ENCODE measurements at regions of chr7 and their contacts with region 1.

Region 1: DNA sequence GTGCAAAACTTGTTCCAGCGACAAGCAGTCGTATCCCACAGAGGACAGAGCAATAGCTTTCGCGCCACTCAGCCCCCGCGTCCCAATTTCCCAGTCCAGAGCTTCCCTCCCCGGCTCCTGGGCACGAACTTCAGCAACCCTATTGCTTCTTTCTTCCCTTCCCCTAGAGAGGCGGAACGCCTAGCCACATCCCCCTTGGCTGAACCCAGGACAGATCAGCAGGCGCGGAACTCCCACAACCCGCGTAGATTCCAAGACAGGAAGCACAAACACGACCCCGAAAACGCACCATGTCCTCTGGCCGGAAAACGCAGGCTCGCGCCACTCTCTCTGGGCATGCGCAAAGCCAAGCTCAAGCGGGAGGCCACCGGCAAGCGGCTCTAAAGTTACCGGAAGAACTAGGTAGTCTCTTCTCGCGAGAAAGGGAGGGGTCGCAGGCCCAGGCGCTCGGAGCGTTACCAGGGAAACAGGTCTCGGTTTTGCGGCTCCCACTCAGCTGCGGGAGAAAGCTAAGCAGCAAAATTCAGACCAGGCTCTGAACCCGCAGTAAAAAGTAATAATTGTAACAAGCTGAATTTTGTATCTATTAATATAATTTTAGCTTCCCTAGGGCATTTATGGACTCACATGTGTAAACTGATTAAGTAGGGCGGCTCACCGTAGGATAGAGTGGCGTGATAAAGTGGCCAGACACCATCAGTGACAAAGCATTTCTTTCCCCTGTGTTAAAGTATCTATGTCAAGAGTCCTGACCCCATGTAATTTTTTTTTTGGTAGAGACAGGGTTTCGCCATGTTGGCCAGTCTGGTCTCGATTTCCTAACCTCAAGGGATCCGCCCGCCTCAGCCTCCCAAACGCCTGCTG is at the start of gene TMEM209:
- DNase-seq: peak; percentile 87
- ATAC-seq: peak; percentile 98
- H3K4me3 ChIP-seq: peak within 1 kb of the TSS; percentile 95
- H3K27ac ChIP-seq: peak within 1 kb of the TSS; percentile 98
- H3K4me1 ChIP-seq: 0 out of 2 replicates have a peak, but pooled peaks cover 4% of the 10 kb centered on the region
- H3K27me3 ChIP-seq: no peaks in the 10 kb centered on the region
- CTCF ChIP-seq: no peak
- total RNA-seq, gene TMEM209: 32.3 TPM

Region 2: DNA sequence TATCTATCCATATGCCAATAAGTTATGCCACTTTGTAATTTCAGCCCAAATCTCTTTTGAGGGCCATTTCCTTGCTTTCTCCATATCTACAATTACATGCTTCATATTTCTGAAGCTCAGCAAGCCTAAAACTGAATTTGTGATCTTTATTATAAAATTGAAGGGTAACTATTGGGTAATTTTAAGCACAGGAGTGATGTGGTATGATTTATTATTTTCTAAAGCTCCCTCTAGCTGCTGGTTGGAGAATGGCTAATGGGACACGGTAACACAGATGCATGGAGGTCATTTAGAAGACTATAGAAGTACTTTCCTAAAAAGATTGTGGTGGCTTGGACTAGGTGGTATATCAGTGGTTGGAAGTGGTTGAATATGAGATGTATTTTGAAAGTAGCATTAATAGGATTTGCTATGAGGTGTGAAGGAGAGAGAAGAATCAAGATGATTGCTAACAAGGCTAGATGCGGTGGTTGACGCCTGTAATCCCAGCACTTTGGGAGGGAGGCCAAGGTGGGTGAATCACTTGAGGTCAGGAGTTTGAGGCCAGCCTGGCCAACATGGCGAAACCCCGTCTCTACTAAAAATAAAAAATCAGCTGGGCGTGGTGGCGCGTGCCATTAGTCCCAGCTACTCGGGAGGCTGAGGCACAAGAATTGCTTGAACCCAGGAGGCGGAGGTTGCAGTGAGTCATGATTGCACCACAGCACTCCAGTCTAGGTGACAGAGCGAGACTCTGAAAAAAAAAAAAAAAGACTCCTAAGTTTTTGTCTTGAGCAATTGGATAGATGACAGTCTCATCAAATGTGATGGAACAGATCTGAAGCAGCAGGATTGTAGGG is 121.1 kb before region 1 on chr7:
- CTCF ChIA-PET with region 1: no interaction called
- POLR2A ChIA-PET with region 1: interaction called, 17 read pairs
- in situ Hi-C with region 1: no loop called
- intact Hi-C with region 1: no loop called
- DNase-seq: no peak
- ATAC-seq: no peak; the same call in 1 of the 2 replicates
- H3K4me3 ChIP-seq: no peak overlapping the region
- H3K27ac ChIP-seq: no peak overlapping the region
- H3K4me1 ChIP-seq: no peaks in the 10 kb centered on the region
- H3K27me3 ChIP-seq: no peaks in the 10 kb centered on the region
- CTCF ChIP-seq: peak; percentile 72

Region 3: GRCh38 chr7:130822642-130823041 is 617.3 kb after region 1 on chr7:
- CTCF ChIA-PET with region 1: interaction called, 12 read pairs
- POLR2A ChIA-PET with region 1: no interaction called
- in situ Hi-C with region 1: no loop called
- intact Hi-C with region 1: no loop called
- DNase-seq: no peak
- ATAC-seq: no peak
- H3K4me3 ChIP-seq: no peak overlapping the region
- H3K27ac ChIP-seq: no peak overlapping the region
- H3K4me1 ChIP-seq: no peaks in the 10 kb centered on the region
- H3K27me3 ChIP-seq: no peaks in the 10 kb centered on the region
- CTCF ChIP-seq: no peak